ENCODE measurements at regions of chr12 and their contacts with region 1.

Region 1: DNA sequence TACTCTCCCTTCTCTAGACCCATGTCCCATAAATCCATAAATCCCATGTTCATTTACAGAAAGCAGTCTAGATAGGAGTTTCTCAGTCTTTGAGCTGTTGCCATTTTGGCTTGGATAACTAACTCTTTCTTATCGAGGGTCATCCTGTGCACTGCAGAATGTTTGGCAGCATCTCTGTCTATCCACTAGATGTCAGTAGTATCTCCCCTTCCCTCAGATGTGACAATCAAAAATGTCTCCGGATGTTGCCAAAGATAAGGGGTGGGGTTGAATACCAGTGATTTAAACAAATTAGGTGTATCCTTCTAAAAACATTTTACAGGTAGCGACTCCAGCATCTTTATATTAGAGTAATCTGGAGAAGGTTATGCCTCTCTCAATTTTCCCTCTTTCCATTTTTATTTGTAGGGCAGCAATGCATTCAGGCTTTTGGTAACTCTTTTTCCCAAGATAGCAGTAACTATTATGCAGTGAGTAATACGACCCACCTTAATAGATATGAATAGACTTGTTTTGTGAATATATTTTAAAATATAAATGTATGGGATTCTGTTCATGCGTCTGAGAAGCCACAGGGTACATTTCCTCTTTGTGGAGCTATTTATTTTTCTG is 100.7 kb downstream of the LRRK2 start:
- DNase-seq: no peak
- H3K4me3 Mint-ChIP-seq: no peak overlapping the region
- H3K27ac Mint-ChIP-seq: no peak overlapping the region
- H3K4me1 Mint-ChIP-seq: no peaks in the 10 kb centered on the region
- H3K27me3 Mint-ChIP-seq: peaks cover 2% of the 10 kb centered on the region

Region 2: GRCh38 chr12:40312982-40313576 is 12.4 kb before region 1 on chr12:
- CTCF ChIA-PET with region 1: interaction called, 11 read pairs
- POLR2A ChIA-PET with region 1: no interaction called
- DNase-seq: no peak
- H3K4me3 Mint-ChIP-seq: no peak overlapping the region
- H3K27ac Mint-ChIP-seq: no peak overlapping the region
- H3K4me1 Mint-ChIP-seq: no peaks in the 10 kb centered on the region
- H3K27me3 Mint-ChIP-seq: peaks cover 1% of the 10 kb centered on the region

Region 3: DNA sequence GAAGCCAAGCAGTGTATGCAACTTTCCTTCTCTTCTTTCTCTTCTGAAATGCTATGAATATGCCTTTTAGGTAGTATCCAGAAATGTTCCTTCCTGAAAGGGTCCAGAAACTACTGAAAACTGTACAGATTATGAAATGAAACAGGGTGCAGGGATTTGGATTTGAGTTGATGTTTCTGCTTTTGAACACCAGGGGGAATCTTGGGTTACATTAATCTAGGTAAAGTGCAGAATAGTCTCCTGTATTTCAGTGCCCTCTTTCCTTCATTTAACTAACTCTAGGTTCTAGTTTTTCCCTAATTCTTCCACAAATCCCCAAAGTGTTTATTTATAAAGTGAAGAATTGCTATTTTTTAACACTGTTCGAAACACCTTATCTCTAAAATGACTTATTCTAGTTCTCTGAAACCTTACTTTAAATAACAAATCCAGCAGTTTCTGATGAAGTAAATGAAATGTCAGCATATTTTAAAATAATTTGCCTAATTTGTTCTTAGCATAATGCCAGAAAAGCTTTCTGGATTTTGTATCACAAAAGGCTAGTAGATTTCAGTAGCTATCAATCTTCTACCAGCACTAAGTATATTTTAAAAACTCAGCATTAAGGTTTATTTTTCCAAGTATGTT is 11.2 kb after region 1 on chr12:
- CTCF ChIA-PET with region 1: no interaction called
- POLR2A ChIA-PET with region 1: no interaction called
- DNase-seq: no peak
- H3K4me3 Mint-ChIP-seq: no peak overlapping the region
- H3K27ac Mint-ChIP-seq: no peak overlapping the region
- H3K4me1 Mint-ChIP-seq: no peaks in the 10 kb centered on the region
- H3K27me3 Mint-ChIP-seq: no peaks in the 10 kb centered on the region

Measured in activated CD4-positive, alpha-beta memory T cell treated with anti-CD3 and anti-CD28 coated beads, Interleukin-2, amount 10 ng/mL, durations not matched to agents 7 days and 5 days (primary cell).